Activated CD8-positive, alpha-beta memory T cell treated with anti-CD3 and anti-CD28 coated beads, Interleukin-2, amount 10 ng/mL, durations not matched to agents 7 days and 5 days (primary cell): ENCODE measurements at regions of chr2 and their contacts with region 1.

Region 1: GRCh38 chr2:230847883-230848388 is 16.8 kb upstream of the ITM2C start:
- DNase-seq: peak; percentile 93
- ATAC-seq: peak; percentile 98
- H3K4me3 Mint-ChIP-seq: no peak overlapping the region
- H3K27ac Mint-ChIP-seq: no peak overlapping the region
- H3K4me1 Mint-ChIP-seq: peaks cover 9% of the 10 kb centered on the region
- H3K27me3 Mint-ChIP-seq: peaks cover 64% of the 10 kb centered on the region

Region 2: DNA sequence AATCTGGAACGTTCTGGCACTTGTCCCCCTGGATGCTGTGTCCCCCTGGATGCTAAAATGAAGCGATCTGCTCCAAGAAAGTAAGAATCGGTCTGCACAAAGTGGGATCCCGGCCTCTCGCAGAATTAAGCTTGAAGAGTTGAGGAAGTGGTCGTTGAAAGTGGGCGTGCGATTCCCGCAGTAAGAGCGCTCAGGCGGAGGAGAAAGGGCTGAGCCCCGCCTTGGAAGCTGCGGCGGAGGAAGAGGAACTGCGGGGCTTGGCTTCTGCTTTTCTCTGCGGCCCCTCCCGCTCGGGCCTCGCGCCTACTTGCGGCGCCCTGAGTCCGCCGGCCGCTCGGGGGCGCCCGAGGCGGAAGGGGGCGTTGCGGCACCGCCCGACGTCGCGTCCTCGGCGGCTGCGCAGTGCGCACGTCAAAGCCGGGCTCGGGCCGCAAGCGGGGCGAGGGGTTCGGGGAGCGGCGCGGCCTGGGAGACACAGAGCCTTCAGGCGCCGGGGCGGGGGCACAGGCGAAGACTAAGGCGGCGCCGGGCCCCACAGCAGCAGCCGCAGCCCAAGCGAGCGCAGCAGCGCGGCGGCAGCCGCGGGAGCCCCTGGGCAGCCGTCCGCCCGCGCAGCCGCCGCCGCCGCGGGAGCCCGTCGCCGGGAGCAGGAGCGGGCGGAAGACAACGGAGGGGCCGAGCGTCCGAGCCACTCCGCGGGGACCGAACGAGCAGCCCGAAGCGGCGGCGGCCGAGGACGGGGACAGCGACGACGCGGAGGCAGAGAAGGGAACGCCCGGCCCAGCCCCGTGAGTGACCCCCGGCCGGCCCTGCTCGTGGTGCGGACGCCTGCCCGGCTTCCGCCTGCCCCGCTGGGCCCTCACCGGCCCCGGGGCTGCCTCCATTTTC is 135.2 kb before region 1 on chr2 and contains the start of gene CAB39:
- CTCF ChIA-PET with region 1: no interaction called
- DNase-seq: peak; percentile 89
- ATAC-seq: peak; percentile 88
- H3K4me3 Mint-ChIP-seq: peak within 1 kb of the TSS; percentile 97
- H3K27ac Mint-ChIP-seq: peak within 1 kb of the TSS; percentile 96
- H3K4me1 Mint-ChIP-seq: peaks cover 42% of the 10 kb centered on the region
- H3K27me3 Mint-ChIP-seq: no peaks in the 10 kb centered on the region
- total RNA-seq, gene CAB39: 148 to 174 TPM

Region 3: GRCh38 chr2:230824406-230824978 is 23.4 kb before region 1 on chr2:
- CTCF ChIA-PET with region 1: interaction called, 31 read pairs
- DNase-seq: peak; percentile 71
- ATAC-seq: peak; percentile 82
- H3K4me3 Mint-ChIP-seq: peak overlapping the region; percentile 37
- H3K27ac Mint-ChIP-seq: peak overlapping the region; percentile 60
- H3K4me1 Mint-ChIP-seq: peaks cover 11% of the 10 kb centered on the region
- H3K27me3 Mint-ChIP-seq: peaks cover 36% of the 10 kb centered on the region

Region 4: GRCh38 chr2:230830428-230830827 is 17.5 kb before region 1 on chr2:
- CTCF ChIA-PET with region 1: interaction called, 31 read pairs
- DNase-seq: no peak
- ATAC-seq: no peak
- H3K4me3 Mint-ChIP-seq: no peak overlapping the region
- H3K27ac Mint-ChIP-seq: no peak overlapping the region
- H3K4me1 Mint-ChIP-seq: peaks cover 7% of the 10 kb centered on the region
- H3K27me3 Mint-ChIP-seq: peaks cover 66% of the 10 kb centered on the region

Region 5: DNA sequence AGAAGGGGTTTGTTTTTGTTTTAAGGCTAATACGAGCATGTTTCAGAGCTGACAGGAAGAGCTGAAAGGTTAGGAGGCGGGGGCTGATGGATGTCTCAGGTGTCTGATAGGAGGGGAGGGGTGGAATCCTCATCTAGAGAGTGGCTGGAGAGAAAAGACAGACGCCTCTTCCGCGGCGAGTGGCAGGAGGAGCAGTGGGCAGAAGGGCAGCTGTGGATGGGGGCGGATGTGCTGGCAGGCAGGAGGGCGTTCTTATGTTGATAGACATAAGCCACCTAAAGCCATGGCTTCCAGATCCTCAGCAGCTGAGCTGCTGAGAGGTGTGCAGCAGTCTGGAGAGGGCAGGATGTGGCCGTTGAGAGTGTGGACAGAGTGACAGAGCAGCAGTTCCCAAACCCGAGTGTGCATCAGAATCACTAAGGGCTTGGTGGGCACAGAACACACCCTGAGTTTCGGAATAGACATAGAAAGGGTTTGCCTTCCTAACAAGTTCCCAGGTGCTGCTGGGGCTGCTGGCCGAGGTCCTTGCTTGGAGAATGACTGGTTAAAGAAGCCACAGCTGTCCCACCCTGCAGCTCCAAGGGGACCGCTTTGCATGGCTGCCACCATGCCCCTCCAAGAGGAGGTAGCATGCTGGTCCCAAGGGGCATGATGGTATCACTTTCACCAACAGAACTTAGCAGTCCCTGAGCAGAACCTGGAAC is 13.8 kb after region 1 on chr2:
- CTCF ChIA-PET with region 1: interaction called, 29 read pairs
- DNase-seq: peak; percentile 59
- ATAC-seq: peak; percentile 42
- H3K4me3 Mint-ChIP-seq: no peak overlapping the region
- H3K27ac Mint-ChIP-seq: peak overlapping the region; percentile 7
- H3K4me1 Mint-ChIP-seq: peaks cover 36% of the 10 kb centered on the region
- H3K27me3 Mint-ChIP-seq: peaks cover 67% of the 10 kb centered on the region

Region 6: GRCh38 chr2:230877732-230878598 is 30.0 kb after region 1 on chr2:
- CTCF ChIA-PET with region 1: interaction called, 11 read pairs
- DNase-seq: peak; percentile 89
- ATAC-seq: peak; percentile 93
- H3K4me3 Mint-ChIP-seq: peak overlapping the region; percentile 54
- H3K27ac Mint-ChIP-seq: peak overlapping the region; percentile 92
- H3K4me1 Mint-ChIP-seq: peaks cover 46% of the 10 kb centered on the region
- H3K27me3 Mint-ChIP-seq: peaks cover 24% of the 10 kb centered on the region

Region 7: DNA sequence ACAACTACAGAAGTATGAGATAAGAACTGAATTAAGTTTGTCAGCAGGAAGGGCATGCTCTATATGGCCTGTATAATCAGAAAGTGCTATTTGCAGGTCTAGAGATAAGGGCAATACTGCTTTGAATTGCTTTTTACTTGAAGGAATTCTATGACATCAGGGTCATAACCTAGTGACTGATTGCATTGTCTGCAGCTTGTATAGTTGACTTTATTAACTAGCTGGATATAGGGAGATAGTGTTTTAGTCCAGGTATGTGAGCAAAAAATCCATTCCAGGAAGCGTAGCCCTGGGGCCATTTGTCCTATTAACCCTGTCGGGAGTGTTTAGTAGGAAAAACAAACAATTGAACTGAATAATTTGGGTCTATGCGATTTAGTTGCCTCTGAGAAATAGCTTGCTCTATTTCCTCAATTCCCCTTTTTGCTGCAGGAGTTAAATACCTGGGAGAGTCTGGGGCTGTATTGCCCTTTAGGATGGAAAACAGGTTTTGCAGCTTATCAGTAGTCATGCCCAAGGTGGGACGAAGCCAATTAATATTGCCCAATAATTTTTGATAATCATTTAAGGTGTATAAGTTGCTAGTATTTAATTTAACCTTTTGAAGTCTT is 246.9 kb after region 1 on chr2:
- CTCF ChIA-PET with region 1: no interaction called
- DNase-seq: no peak
- ATAC-seq: no peak
- H3K4me3 Mint-ChIP-seq: no peak overlapping the region
- H3K27ac Mint-ChIP-seq: no peak overlapping the region
- H3K4me1 Mint-ChIP-seq: no peaks in the 10 kb centered on the region
- H3K27me3 Mint-ChIP-seq: no peaks in the 10 kb centered on the region

Region 8: DNA sequence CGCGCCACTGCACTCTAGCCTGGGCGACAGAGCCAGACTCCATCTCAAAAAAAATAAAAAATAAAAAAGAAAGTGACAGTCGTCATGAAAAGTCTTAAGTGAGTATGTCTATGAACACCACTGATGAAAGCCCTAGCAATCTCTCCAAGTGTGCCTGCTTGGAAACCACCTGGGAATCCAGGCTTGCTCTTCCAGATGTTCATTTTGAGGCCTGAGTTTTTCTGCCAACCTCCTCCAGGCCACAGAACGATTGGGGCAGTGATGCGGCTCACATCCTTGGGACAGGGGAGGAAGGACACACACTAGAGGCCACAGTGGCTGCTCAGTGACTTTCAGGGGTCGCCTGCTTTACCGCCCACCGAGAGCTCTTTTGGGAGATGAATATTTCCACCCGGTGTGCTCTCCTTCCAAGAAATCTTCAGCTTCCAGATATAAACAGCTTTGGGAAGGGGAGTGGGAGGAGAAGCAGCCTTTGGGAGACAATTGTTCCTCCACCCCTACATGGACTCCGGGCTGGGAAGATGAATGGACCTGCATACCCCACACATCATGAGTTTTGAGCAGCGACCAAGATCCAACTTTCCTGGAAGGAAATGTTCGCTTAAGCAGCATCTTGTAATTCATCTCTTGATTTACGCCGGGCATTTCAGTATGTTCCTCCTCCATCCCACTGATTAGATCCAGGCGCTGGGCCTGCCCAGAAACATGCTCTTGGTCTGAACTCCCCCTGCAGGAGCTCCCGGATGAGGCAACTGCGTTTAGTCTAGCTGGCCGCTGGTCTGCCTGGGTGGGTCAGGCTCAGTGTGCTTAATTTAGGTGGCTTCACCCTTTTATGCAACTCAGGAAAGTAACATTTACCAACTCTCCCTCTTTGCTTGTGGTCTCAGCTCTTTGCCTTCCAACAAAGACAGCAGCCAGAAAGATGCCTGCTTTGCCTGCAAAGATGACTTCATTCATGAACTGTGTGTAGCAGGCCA is 344.2 kb after region 1 on chr2:
- CTCF ChIA-PET with region 1: no interaction called
- DNase-seq: no peak
- ATAC-seq: no peak
- H3K4me3 Mint-ChIP-seq: no peak overlapping the region
- H3K27ac Mint-ChIP-seq: no peak overlapping the region
- H3K4me1 Mint-ChIP-seq: no peaks in the 10 kb centered on the region
- H3K27me3 Mint-ChIP-seq: peaks cover 62% of the 10 kb centered on the region